Ovary (tissue), 10 donors: ENCODE measurements at regions of chr17 and their contacts with region 1.

Region 1: GRCh38 chr17:18066866-18067265 is 20.9 kb upstream of the DRG2 start:
- DNase-seq: no peak
- H3K4me3 ChIP-seq: no peak overlapping the region
- H3K27ac ChIP-seq: no peak overlapping the region
- H3K4me1 ChIP-seq: no peaks in the 10 kb centered on the region
- H3K27me3 ChIP-seq: no peaks in the 10 kb centered on the region
- CTCF ChIP-seq: no peak
- EP300 ChIP-seq: no peak
- POLR2A ChIP-seq: no peak

Region 2: GRCh38 chr17:17972126-17972951 is 94.5 kb before region 1 on chr17 and contains the starts of genes DRC3 and TOM1L2:
- intact Hi-C with region 1: no loop called
- DNase-seq: peak; percentile 100
- H3K4me3 ChIP-seq: peak within 1 kb of the TSS; percentile 97
- H3K27ac ChIP-seq: peak within 1 kb of the TSS; percentile 63 to 74
- H3K4me1 ChIP-seq: peaks cover 9% of the 10 kb centered on the region
- H3K27me3 ChIP-seq: no peaks in the 10 kb centered on the region
- CTCF ChIP-seq: peak in 2 of 3 donors; percentile 18 to 26
- EP300 ChIP-seq: peak; percentile 49
- POLR2A ChIP-seq: peak; percentile 83
- total RNA-seq, gene DRC3: 3.6 to 35.3 (median 6.0) TPM
- total RNA-seq, gene TOM1L2: 25.6 to 62.5 (median 50.4) TPM

Region 3: DNA sequence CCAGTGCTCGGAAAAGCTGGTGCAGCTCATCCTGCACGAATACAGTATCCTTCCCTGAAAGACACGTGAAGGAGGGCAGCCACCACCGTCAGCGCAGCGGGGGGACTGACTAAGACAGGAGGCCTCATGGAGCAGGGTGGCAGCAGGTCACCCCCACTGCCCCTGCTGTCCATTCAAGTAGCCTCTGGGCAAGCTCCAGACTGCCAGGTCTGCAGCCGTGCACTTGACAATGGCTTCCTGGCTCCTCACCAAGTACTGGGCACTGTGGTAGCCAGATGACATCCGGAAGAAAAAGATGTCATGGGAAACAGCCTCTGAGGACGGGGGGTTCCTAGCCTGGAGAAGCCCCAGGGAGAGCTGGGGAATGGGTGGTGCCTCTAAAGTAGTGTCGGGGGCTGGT is 33.8 kb after region 1 on chr17:
- intact Hi-C with region 1: loop called in 1 of 4 experiments (anchors 2 kb)
- DNase-seq: no peak
- H3K4me3 ChIP-seq: no peak overlapping the region
- H3K27ac ChIP-seq: no peak overlapping the region
- H3K4me1 ChIP-seq: no peaks in the 10 kb centered on the region
- H3K27me3 ChIP-seq: no peaks in the 10 kb centered on the region
- CTCF ChIP-seq: no peak
- EP300 ChIP-seq: no peak
- POLR2A ChIP-seq: no peak